HepG2 (cell line): ENCODE measurements at regions of chr19 and their contacts with region 1.

Region 1: GRCh38 chr19:47742634-47743033 is 2.7 kb upstream of the NOP53 start:
- DNase-seq: no peak
- ATAC-seq: no peak
- H3K4me3 ChIP-seq: peak overlapping the region in 1 of 3 experiments; percentile 74; a peak in 2 of 6 replicates
- H3K27ac ChIP-seq: no peak overlapping the region
- H3K4me1 ChIP-seq: peaks cover 43% of the 10 kb centered on the region
- H3K27me3 ChIP-seq: no peaks in the 10 kb centered on the region
- CTCF ChIP-seq: no peak
- EP300 ChIP-seq: no peak
- POLR2A ChIP-seq: no peak
- RAD21 ChIP-seq: no peak

Region 2: GRCh38 chr19:47707135-47707925 is 35.3 kb before region 1 on chr19:
- CTCF ChIA-PET with region 1: interaction called, 25 read pairs
- POLR2A ChIA-PET with region 1: interaction called, 7 read pairs
- in situ Hi-C with region 1: loop called (anchors 5 kb)
- intact Hi-C with region 1: no loop called
- DNase-seq: peak; percentile 71
- ATAC-seq: peak; percentile 94
- H3K4me3 ChIP-seq: no peak overlapping the region
- H3K27ac ChIP-seq: no peak overlapping the region
- H3K4me1 ChIP-seq: peaks cover 10% of the 10 kb centered on the region
- H3K27me3 ChIP-seq: no peaks in the 10 kb centered on the region; a peak in 1 of 5 replicates
- CTCF ChIP-seq: peak; percentile 88
- EP300 ChIP-seq: no peak
- POLR2A ChIP-seq: no peak
- RAD21 ChIP-seq: peak; percentile 72

Region 3: DNA sequence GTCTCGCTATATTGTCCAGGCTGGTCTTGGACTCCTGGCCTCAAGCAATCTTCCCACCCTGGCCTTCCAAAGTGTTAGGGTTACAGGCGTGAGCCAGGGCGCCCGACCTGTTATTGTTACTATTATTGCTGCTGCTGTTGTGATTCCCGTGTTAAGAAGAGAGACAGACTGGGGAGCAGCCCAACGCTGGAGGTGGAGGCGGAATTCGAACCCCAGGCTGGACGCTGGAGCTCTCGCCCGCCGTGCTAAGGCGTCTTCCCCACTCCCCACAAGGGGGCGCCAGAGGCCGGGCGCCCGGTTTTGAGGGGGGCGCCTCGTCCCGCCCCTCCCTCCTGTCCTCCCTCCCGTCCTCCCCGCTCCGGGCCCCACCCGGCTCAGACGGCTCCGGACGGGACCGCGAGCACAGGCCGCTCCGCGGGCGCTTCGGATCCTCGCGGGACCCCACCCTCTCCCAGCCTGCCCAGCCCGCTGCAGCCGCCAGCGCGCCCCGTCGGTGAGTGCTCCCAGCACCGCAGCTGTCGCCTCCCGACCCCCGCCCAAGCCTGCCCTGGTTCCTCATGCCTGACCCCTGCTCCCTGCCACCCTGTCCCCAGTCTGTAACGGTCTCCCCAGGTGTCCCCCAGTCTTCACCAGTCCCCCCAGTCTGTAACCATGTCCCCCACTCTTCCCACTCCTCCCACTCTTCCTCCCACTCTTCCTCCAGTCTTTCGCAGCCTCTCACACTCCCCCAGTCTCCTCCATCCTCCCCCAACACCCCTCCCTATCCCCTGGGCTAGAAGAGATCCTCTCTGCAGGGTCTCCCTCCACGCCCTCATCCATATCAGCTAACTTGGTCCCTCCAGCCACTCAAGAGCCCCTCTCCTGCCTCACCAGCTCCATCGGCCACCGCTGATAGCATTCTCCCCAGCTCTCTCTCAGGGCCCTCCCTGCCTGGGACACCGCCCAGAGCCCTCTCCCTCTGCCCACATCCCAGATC is 29.3 kb before region 1 on chr19 and contains the start of gene EHD2:
- CTCF ChIA-PET with region 1: interaction called, 25 read pairs
- POLR2A ChIA-PET with region 1: interaction called, 7 read pairs
- in situ Hi-C with region 1: no loop called
- intact Hi-C with region 1: no loop called
- DNase-seq: no peak
- ATAC-seq: peak; percentile 49
- H3K4me3 ChIP-seq: no peak within 1 kb of the TSS; a peak in 1 of 6 replicates
- H3K27ac ChIP-seq: no peak within 1 kb of the TSS
- H3K4me1 ChIP-seq: peaks cover 28% of the 10 kb centered on the region
- H3K27me3 ChIP-seq: peaks cover 0 to 13% of the 10 kb centered on the region in 2 experiments; a peak in 4 of 5 replicates
- CTCF ChIP-seq: peak; percentile 79
- EP300 ChIP-seq: no peak
- POLR2A ChIP-seq: no peak
- RAD21 ChIP-seq: peak; percentile 84
- total RNA-seq, gene EHD2: 0.08 and 0.09 TPM in 2 replicates